ENCODE measurements at regions of chr14 and their contacts with region 1.

Region 1: DNA sequence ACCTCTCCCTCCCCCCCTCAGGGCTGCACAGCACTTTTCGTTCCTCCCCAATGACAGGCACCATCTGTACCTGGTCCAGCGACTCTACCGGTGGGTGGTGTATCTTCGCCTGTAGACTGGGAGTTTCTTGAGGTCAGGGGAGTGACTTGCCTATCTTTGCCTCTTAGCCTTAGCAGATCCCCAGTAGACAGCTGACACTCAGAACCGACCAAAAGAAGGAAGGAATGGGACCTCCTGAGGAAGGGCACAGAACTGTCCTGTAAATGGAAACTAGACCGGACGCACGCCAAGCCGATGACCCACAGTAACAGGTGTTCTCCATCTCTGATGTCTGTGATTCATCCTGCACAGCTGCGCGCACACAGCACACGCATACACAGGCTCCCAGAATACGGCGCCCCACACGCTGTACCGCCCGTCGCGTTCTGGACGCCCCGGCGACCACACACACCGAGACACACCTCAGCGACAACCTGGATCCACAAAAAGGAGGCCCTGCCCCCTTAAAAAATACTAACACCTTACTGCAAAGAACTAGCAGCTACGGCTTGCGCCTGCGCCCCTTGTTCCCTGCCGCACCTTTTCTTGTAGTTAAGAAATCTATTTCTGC is 673 bp upstream of the TTC9 start:
- DNase-seq: peak; percentile 24 to 76 (median 62)
- ATAC-seq: peak; percentile 78
- H3K4me3 ChIP-seq: peak overlapping the region; percentile 75
- H3K4me3 Mint-ChIP-seq: peak overlapping the region; percentile 93 to 100 (median 98)
- H3K27ac ChIP-seq: peak overlapping the region; percentile 91
- H3K27ac Mint-ChIP-seq: peak overlapping the region; percentile 85 to 99 (median 94)
- H3K4me1 ChIP-seq: peaks cover 18 to 24% of the 10 kb centered on the region in 2 donors
- H3K4me1 Mint-ChIP-seq: peaks cover 36 to 59% (median 46%) of the 10 kb centered on the region in 7 donors
- H3K27me3 ChIP-seq: no peaks in the 10 kb centered on the region
- H3K27me3 Mint-ChIP-seq: no peaks in the 10 kb centered on the region

Region 2: DNA sequence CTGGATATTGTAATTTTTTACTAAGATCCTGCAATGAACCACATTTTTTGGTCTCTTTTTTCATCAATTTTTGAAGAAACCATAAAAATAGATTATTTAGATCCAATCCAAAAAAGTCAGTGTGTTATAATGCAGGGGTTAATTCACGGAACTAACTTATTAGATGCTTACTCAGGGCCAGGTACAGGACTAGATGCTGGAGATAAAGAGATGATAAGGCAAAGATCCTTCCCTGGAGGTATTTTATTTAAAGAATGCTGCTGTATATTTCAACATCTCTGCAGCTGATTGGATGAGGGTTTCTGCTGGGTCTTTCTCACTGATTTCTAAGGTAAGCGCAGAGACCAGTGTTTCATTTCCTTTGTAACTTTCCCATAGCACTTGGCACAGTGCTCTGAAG is 258.0 kb before region 1 on chr14:
- CTCF ChIA-PET with region 1: no interaction called
- POLR2A ChIA-PET with region 1: no interaction called
- intact Hi-C with region 1: no loop called
- DNase-seq: no peak
- ATAC-seq: no peak
- H3K4me3 ChIP-seq: no peak overlapping the region
- H3K4me3 Mint-ChIP-seq: no peak overlapping the region
- H3K27ac ChIP-seq: no peak overlapping the region
- H3K27ac Mint-ChIP-seq: no peak overlapping the region
- H3K4me1 ChIP-seq: no peaks in the 10 kb centered on the region
- H3K4me1 Mint-ChIP-seq: peaks cover 0 to 2% (median 0%) of the 10 kb centered on the region in 7 donors
- H3K27me3 ChIP-seq: no peaks in the 10 kb centered on the region
- H3K27me3 Mint-ChIP-seq: no peaks in the 10 kb centered on the region

Region 3: GRCh38 chr14:70585219-70585618 is 55.8 kb before region 1 on chr14:
- CTCF ChIA-PET with region 1: no interaction called
- POLR2A ChIA-PET with region 1: no interaction called
- intact Hi-C with region 1: no loop called
- DNase-seq: no peak
- ATAC-seq: no peak
- H3K4me3 ChIP-seq: no peak overlapping the region
- H3K4me3 Mint-ChIP-seq: no peak overlapping the region
- H3K27ac ChIP-seq: no peak overlapping the region
- H3K27ac Mint-ChIP-seq: peak overlapping the region in 2 of 9 donors; percentile 6 to 11
- H3K4me1 ChIP-seq: no peaks in the 10 kb centered on the region
- H3K4me1 Mint-ChIP-seq: peaks cover 0 to 10% (median 3%) of the 10 kb centered on the region in 7 donors
- H3K27me3 ChIP-seq: no peaks in the 10 kb centered on the region
- H3K27me3 Mint-ChIP-seq: no peaks in the 10 kb centered on the region

Region 4: GRCh38 chr14:70622111-70622712 is 18.8 kb before region 1 on chr14:
- CTCF ChIA-PET with region 1: interaction called, 6 read pairs
- POLR2A ChIA-PET with region 1: interaction called, 12 read pairs
- intact Hi-C with region 1: loop called in 1 of 2 experiments (anchors 1 kb)
- DNase-seq: peak in 8 of 9 donors; percentile 42 to 66 (median 56)
- ATAC-seq: peak; percentile 85
- H3K4me3 ChIP-seq: no peak overlapping the region
- H3K4me3 Mint-ChIP-seq: peak overlapping the region in 1 of 10 donors; percentile 11
- H3K27ac ChIP-seq: no peak overlapping the region
- H3K27ac Mint-ChIP-seq: peak overlapping the region in 3 of 9 donors; percentile 2 to 29 (median 17)
- H3K4me1 ChIP-seq: no peaks in the 10 kb centered on the region
- H3K4me1 Mint-ChIP-seq: peaks cover 0 to 10% (median 6%) of the 10 kb centered on the region in 7 donors
- H3K27me3 ChIP-seq: no peaks in the 10 kb centered on the region
- H3K27me3 Mint-ChIP-seq: peaks cover 0 to 20% (median 0%) of the 10 kb centered on the region in 5 donors

Region 5: DNA sequence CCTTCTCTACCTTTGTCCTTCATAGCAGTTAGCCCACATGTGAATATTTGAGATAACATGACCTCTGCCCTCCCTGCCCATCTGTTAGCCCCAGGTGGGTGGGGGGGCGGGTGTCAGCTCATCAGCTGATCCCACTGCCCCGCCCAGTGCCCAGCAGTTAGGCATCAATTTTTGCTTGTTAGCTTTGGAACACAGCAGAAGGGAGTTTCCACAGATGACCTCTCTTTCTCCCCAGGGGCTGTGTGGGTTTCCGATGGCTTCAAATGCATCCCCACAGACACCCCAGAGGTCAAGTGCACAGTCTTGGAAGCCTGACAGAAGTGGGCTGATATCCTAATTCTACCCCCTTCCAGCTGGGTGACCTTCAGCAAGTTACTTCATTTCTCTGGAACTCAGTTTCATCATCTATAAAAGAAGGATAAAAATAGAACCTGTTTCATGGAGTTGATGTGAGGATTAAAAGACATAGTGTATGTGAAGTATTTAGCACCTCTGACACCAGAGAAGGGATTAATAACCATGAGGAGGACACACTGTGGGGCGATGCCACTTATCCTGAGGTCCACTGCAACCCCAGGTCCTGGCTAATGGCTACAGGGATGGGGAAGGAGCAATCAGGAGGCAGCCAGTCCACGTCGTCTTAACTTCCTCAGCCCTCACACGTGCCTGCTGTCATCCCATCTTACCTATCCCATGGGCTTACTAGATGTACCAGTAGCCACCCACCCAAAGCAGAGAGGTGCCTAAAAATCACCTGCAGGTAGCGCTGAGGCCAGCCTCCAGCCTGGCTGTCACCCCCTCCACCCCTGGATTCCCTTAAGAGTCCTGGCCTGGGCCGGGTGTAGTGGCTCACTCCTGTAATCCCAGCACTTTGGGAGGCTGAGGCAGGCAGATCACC is 22.8 kb after region 1 on chr14:
- CTCF ChIA-PET with region 1: interaction called, 21 read pairs
- POLR2A ChIA-PET with region 1: interaction called, 313 read pairs
- intact Hi-C with region 1: loop called (anchors 1 to 2 kb)
- DNase-seq: no peak
- ATAC-seq: no peak
- H3K4me3 ChIP-seq: no peak overlapping the region
- H3K4me3 Mint-ChIP-seq: peak overlapping the region in 4 of 10 donors; percentile 61 to 84 (median 72)
- H3K27ac ChIP-seq: no peak overlapping the region
- H3K27ac Mint-ChIP-seq: peak overlapping the region in 8 of 9 donors; percentile 81 to 99 (median 96)
- H3K4me1 ChIP-seq: peaks cover 33 to 83% of the 10 kb centered on the region in 2 donors
- H3K4me1 Mint-ChIP-seq: peaks cover 62 to 95% (median 83%) of the 10 kb centered on the region in 7 donors
- H3K27me3 ChIP-seq: no peaks in the 10 kb centered on the region
- H3K27me3 Mint-ChIP-seq: no peaks in the 10 kb centered on the region

Region 6: DNA sequence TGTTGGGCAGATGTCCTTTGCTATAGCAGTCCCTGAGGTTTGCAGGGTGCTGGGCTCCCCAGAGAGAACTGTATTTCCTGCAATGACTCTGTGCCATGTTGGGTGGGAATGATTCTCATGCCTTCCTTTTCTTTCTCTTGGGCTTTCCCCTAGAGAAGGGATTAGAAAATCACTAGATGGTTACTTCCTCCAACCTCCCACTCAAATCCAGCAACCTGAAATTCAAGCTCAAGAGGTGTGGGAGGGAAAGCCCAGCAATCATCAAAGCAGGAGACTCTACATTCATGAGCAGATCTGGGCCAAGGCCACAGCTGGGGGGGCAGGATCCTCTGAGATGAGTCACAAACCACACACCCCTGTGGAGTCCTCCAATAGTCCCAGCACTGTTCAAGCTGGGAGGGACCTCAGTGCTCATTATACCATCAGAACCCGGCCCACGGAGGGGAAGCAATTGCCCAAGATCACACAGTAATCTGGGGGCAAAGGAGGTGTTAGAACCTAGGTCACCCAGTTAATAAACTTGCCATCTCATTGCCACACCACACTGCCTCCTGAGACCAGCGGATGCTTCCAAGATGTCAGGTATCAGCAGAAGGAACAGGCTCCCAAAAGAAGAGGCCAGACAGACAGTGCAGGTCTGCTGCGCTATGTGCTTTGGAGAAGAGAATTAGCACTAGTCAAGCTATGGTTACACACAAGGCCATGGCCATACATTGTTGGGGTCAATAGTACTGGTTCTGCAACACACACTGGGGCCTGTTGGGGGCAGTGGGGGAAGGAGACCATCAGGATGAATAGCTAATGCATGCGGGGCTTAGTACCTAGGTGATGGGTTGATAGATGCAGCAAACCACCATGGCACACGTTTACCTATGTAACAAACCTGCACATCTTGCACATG is 66.3 kb after region 1 on chr14:
- CTCF ChIA-PET with region 1: no interaction called
- POLR2A ChIA-PET with region 1: interaction called, 4 read pairs
- intact Hi-C with region 1: loop called (anchors 1 to 5 kb)
- DNase-seq: no peak
- ATAC-seq: no peak
- H3K4me3 ChIP-seq: no peak overlapping the region
- H3K4me3 Mint-ChIP-seq: no peak overlapping the region
- H3K27ac ChIP-seq: no peak overlapping the region
- H3K27ac Mint-ChIP-seq: no peak overlapping the region
- H3K4me1 ChIP-seq: no peaks in the 10 kb centered on the region
- H3K4me1 Mint-ChIP-seq: peaks cover 0 to 4% (median 0%) of the 10 kb centered on the region in 7 donors
- H3K27me3 ChIP-seq: no peaks in the 10 kb centered on the region
- H3K27me3 Mint-ChIP-seq: peaks cover 0 to 12% (median 0%) of the 10 kb centered on the region in 5 donors

Region 7: GRCh38 chr14:70809543-70810244 is 168.7 kb after region 1 on chr14:
- CTCF ChIA-PET with region 1: no interaction called
- POLR2A ChIA-PET with region 1: interaction called, 5 read pairs
- intact Hi-C with region 1: loop called (anchors 1 kb)
- DNase-seq: peak; percentile 68 to 87 (median 78)
- ATAC-seq: peak; percentile 90
- H3K4me3 ChIP-seq: peak overlapping the region; percentile 73
- H3K4me3 Mint-ChIP-seq: peak overlapping the region in 1 of 10 donors; percentile 87
- H3K27ac ChIP-seq: peak overlapping the region; percentile 65
- H3K27ac Mint-ChIP-seq: peak overlapping the region in 6 of 9 donors; percentile 79 to 92 (median 88)
- H3K4me1 ChIP-seq: peaks cover 3 to 10% of the 10 kb centered on the region in 2 donors
- H3K4me1 Mint-ChIP-seq: peaks cover 9 to 17% (median 13%) of the 10 kb centered on the region in 7 donors
- H3K27me3 ChIP-seq: no peaks in the 10 kb centered on the region
- H3K27me3 Mint-ChIP-seq: peaks cover 0 to 9% (median 4%) of the 10 kb centered on the region in 5 donors

Region 8: GRCh38 chr14:71048393-71048792 is 407.4 kb after region 1 on chr14:
- CTCF ChIA-PET with region 1: no interaction called
- POLR2A ChIA-PET with region 1: no interaction called
- intact Hi-C with region 1: no loop called
- DNase-seq: no peak
- ATAC-seq: no peak
- H3K4me3 ChIP-seq: no peak overlapping the region
- H3K4me3 Mint-ChIP-seq: no peak overlapping the region
- H3K27ac ChIP-seq: no peak overlapping the region
- H3K27ac Mint-ChIP-seq: peak overlapping the region in 2 of 9 donors; percentile 1 to 26
- H3K4me1 ChIP-seq: no peaks in the 10 kb centered on the region
- H3K4me1 Mint-ChIP-seq: peaks cover 4 to 42% (median 29%) of the 10 kb centered on the region in 7 donors
- H3K27me3 ChIP-seq: no peaks in the 10 kb centered on the region
- H3K27me3 Mint-ChIP-seq: no peaks in the 10 kb centered on the region